Pancreas (tissue), 10 donors: ENCODE measurements at regions of chr22 and their contacts with region 1.

Region 1: GRCh38 chr22:32522237-32522636 is 47.6 kb downstream of the FBXO7 start:
- DNase-seq: no peak
- ATAC-seq: no peak
- H3K4me3 ChIP-seq: no peak overlapping the region
- H3K27ac ChIP-seq: no peak overlapping the region
- H3K4me1 ChIP-seq: no peaks in the 10 kb centered on the region
- H3K27me3 ChIP-seq: no peaks in the 10 kb centered on the region
- CTCF ChIP-seq: no peak

Region 2: DNA sequence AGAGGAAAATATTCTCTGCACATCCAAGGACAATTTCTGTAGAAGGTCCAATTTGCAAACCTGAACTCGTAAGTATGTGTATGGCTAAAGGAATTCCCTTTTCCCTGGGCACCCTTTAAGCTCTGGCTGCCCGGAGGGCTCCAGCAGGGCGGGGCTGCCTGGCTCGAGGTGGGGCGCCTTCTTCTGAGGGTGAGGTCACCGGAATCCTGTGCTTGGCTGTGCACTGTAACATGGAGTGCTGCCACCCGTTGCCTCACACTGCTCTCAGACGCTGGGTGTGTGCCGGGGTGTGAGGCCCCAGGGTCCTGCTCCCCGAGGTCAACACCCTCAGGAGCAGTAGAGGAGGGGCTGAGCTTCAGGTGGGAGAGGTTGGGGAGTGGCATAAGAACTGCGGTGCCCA is 474.5 kb after region 1 on chr22:
- intact Hi-C with region 1: loop called in 1 of 3 experiments (anchors 5 kb)
- DNase-seq: peak in 1 of 6 donors; percentile 18
- ATAC-seq: peak in 2 of 4 donors; percentile 34 to 60
- H3K4me3 ChIP-seq: no peak overlapping the region
- H3K27ac ChIP-seq: no peak overlapping the region
- H3K4me1 ChIP-seq: no peaks in the 10 kb centered on the region
- H3K27me3 ChIP-seq: peaks cover 0 to 5% (median 0%) of the 10 kb centered on the region in 4 donors
- CTCF ChIP-seq: no peak